Posterior cingulate gyrus (tissue), 11 donors: ENCODE measurements at regions of chr3 and their contacts with region 1.

Region 1: GRCh38 chr3:37855363-37855970 is 6.2 kb upstream of the CTDSPL start:
- DNase-seq: peak; percentile 75 to 98 (median 90)

Region 2: DNA sequence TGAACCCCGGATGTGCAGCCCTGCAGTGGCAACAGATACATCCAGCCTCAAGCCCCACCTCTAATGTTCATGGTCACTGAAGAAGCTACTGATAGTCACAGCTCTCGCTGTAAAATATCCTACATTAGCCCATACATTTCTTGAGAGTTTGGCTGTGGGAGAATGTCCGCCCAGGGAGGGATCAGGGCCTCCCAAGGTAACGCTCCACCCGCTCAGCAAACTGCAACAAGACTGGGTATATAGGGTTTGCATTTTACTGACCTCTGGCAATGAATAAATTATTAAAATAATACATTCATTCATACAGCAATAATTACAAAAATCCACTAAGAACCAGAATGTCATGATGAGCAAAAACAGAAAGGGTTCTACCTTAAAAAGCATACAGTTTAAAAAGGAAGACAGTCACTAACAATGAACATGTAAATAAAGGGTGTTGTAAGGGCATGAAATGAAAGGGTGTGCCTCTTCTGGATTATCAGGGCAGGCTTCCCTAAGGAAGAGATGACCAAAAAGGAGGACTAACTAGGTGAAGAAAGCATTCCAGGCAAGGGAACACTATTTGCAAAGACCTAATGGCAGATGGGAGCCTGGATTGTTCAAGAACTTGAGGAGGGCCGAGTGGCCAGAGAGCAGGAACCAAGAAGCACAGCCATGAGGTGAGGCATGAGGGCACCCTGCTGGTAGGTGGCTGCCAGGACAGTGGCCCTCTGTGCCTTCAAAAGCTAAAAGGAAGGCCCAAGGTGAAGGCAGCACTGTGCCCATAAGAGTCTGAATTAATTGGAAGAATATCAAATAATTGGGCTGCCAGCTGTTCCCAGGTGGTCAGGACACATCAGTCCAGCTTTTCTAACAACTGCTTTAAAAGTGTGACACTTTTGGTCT is 21.9 kb before region 1 on chr3:
- intact Hi-C with region 1: no loop called
- DNase-seq: no peak

Region 3: GRCh38 chr3:37872413-37873160 is 17.1 kb after region 1 on chr3:
- intact Hi-C with region 1: loop called (anchors 2 kb)
- DNase-seq: no peak

Region 4: GRCh38 chr3:37967260-37967881 is 111.9 kb after region 1 on chr3:
- intact Hi-C with region 1: loop called (anchors 1 kb)
- DNase-seq: peak in 8 of 10 donors; percentile 49 to 94 (median 70)

Region 5: DNA sequence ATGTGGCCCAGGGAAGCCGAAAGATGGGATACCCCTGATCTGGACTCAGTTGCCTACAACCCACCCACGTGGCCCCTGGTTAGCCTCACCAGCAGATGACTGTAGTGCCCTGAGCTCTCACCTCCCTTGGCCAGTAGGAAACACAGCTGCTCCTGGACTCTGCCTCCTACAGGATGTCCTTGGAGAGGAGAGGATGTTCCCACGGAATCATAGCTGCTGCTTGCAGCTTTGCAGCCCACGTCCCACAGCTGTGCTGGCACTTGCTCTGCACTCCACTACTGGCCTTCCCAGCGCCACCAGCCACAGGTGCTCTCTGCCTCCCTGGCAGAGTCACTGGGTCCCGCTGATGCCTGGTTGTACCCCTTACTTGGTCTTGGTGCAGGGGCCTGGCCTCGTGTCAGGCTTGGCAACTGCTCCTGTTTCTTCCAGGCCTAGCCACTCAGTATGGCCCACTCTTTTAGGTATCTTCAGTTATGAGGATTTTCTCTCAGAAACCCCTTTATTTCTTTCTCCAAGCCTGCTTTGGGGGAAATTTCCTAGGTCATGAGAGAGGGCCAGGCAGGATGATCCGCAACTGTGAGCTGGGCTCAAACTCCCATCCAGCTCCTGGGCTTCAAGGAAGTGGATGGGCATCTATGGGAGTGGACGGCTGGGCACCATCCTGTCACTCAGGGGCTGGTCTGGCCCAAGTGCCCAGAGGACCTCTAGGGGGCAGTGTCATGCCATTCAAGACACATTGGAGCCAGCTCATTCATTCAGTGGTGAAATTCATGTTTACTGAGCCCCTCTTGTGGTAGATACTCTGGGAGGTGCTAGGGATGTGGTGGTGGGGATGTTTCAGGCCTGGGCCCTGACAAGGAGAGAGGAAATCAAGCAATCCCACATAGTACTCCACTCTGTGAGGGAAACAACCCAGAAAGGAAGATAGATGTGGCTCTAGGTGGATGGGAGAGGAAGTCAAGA is 118.9 kb after region 1 on chr3:
- intact Hi-C with region 1: loop called (anchors 2 kb)
- DNase-seq: peak in 7 of 10 donors; percentile 63 to 94 (median 70)

Region 6: GRCh38 chr3:38004415-38005076 is 149.1 kb after region 1 on chr3:
- intact Hi-C with region 1: loop called (anchors 1 kb)
- DNase-seq: peak; percentile 64 to 96 (median 84)

Region 7: GRCh38 chr3:38177181-38177580 is 321.7 kb after region 1 on chr3:
- intact Hi-C with region 1: no loop called
- DNase-seq: no peak